MCF 10A (cell line): ENCODE measurements at regions of chr11 and their contacts with region 1.

Region 1: GRCh38 chr11:67420646-67421420 is 5.4 kb downstream of the CARNS1 start:
- DNase-seq: peak; percentile 94
- H3K4me3 Mint-ChIP-seq: peak overlapping the region; percentile 74
- H3K27ac Mint-ChIP-seq: no peak overlapping the region
- H3K4me1 Mint-ChIP-seq: peaks cover 20% of the 10 kb centered on the region
- H3K27me3 Mint-ChIP-seq: no peaks in the 10 kb centered on the region
- CTCF ChIP-seq: no peak

Region 2: DNA sequence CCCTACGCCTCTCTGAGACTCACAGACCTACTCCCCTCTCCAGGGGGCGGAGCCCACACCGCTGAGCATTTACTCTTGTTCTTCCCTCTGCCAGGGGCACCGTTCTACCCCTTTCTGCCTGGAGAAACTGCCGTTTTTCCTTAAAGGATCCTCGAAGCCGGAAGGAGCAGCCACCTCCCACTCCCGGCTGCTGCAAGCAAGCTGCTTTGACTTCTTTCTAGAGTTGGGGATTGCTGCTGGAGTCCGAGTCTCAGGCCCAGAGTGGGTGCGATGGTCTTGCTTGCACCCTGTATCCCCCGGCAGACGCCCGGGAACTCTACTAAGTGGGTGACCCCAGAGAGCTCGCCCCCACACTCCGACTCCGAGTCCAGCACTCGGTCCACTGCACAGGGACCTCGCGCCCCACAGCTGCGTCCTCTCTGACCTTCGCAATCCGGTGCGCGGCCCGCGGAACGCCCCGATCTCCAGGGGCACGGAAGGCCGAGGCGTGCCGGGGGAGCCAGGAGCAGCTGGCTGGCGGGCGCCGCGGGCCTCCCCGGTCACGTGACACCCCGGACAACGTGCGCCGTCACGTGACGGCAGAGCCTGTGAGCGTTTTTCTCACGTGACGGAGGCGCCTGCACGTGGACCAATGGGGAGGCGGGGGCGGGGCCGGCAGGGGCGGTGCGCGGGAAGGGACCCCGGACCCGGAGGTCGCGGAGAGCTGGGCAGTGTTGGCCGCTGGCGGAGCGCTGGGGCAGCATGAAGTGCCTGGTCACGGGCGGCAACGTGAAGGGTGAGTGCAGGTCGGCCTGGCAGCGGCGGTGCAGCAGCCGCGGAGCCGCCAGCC is 29.3 kb before region 1 on chr11 and contains the start of gene RAD9A:
- CTCF ChIA-PET with region 1: no interaction called
- POLR2A ChIA-PET with region 1: interaction called, 12 read pairs
- intact Hi-C with region 1: no loop called
- DNase-seq: peak; percentile 92
- H3K4me3 Mint-ChIP-seq: peak within 1 kb of the TSS; percentile 85
- H3K27ac Mint-ChIP-seq: peak within 1 kb of the TSS; percentile 76
- H3K4me1 Mint-ChIP-seq: peaks cover 17% of the 10 kb centered on the region
- H3K27me3 Mint-ChIP-seq: no peaks in the 10 kb centered on the region
- CTCF ChIP-seq: no peak
- total RNA-seq, gene RAD9A: 9.9 and 18.3 TPM in 2 replicates

Region 3: DNA sequence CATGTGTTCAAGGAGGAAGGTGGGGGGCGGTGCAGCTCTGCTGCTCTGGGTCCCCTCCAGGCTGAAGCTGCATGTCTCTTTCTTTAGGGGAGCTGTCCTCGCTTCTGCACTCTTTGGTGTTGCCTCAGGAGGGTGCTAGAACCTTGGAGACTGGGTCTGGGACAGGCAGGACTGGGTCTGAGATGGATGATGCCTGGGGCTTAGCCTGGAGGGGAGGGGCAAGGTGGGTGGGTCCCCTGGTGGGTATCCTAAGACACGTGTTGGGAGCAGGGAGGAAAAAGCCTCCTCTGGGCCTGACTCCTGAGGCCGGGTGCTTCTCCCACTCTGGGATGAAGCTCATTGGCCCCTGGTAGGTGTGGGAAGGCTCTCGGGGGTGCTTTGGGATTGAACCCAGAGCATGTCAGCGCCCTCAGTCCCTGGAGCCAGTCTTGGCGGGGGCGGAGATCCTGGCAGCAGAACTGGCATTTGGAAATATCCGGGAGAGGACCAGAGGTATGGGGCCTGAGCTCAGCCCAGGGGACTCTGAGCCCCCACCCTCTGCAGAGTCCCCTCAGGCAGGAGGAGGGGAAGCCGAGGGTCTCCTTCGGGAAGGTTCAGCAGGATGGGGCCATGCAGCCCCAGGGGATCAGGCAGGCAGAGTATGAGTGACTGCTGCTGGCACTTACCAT is 156.1 kb after region 1 on chr11:
- CTCF ChIA-PET with region 1: no interaction called
- POLR2A ChIA-PET with region 1: no interaction called
- intact Hi-C with region 1: no loop called
- DNase-seq: no peak
- H3K4me3 Mint-ChIP-seq: no peak overlapping the region
- H3K27ac Mint-ChIP-seq: no peak overlapping the region
- H3K4me1 Mint-ChIP-seq: peaks cover 19% of the 10 kb centered on the region
- H3K27me3 Mint-ChIP-seq: peaks cover 18% of the 10 kb centered on the region
- CTCF ChIP-seq: no peak